Activated T-helper 2 cell treated with anti-CD3 and anti-CD28 coated beads, Interferon-gamma antibody, Interleukin-2, Interleukin-4, amounts not matched to agents 10 μg/mL and 5 μg/mL and 100 μg/mL, durations not matched to agents 14 hours and 24 hours and 36 hours (primary cell): ENCODE measurements at regions of chr19 and their contacts with region 1.

Region 1: GRCh38 chr19:23273590-23274413 is 23.6 kb upstream of the ZNF724 start:
- DNase-seq: peak; percentile 88
- H3K4me3 Mint-ChIP-seq: peak overlapping the region; percentile 96
- H3K27ac Mint-ChIP-seq: peak overlapping the region; percentile 89
- H3K4me1 Mint-ChIP-seq: peaks cover 10% of the 10 kb centered on the region
- H3K27me3 Mint-ChIP-seq: no peaks in the 10 kb centered on the region

Region 2: DNA sequence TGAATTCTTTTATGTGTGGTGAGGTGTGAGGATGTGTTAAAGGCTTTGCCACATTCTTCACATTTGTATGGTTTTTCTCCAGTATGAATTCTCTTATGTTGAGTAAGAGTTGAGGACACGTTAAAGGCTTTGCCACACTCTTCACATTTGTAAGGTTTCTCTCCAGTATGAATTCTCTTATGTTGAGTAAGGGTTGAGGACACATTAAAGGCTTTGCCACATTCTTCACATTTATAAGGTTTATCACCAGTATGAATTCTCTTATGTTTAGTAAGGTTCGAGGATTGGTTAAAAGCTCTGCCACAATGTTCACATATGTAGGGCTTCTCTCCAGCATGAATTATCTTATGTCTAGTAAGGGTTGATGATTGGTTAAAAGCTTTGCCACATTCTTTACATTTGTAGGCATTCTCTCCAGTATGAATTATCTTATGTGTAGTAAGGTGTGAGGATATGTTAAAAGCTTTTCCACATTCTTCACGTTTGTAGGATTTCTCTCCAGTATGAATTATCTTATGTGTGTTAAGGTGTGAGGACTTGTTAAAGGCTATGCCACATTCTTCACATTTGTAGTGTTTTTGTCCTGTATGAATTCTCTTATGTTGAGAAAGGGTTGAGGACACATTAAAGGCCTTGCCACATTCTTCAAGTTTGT is 50.7 kb before region 1 on chr19:
- intact Hi-C with region 1: no loop called
- DNase-seq: no peak
- H3K4me3 Mint-ChIP-seq: no peak overlapping the region
- H3K27ac Mint-ChIP-seq: no peak overlapping the region
- H3K4me1 Mint-ChIP-seq: no peaks in the 10 kb centered on the region
- H3K27me3 Mint-ChIP-seq: no peaks in the 10 kb centered on the region

Region 3: GRCh38 chr19:23249911-23250649 is 23.7 kb before region 1 on chr19 and contains the start of gene ZNF724:
- intact Hi-C with region 1: loop called (anchors 1 kb)
- DNase-seq: peak; percentile 89
- H3K4me3 Mint-ChIP-seq: peak within 1 kb of the TSS; percentile 97
- H3K27ac Mint-ChIP-seq: peak within 1 kb of the TSS; percentile 97
- H3K4me1 Mint-ChIP-seq: peaks cover 1% of the 10 kb centered on the region
- H3K27me3 Mint-ChIP-seq: no peaks in the 10 kb centered on the region
- total RNA-seq, gene ZNF724: 12.1 TPM in 2 replicates

Region 4: DNA sequence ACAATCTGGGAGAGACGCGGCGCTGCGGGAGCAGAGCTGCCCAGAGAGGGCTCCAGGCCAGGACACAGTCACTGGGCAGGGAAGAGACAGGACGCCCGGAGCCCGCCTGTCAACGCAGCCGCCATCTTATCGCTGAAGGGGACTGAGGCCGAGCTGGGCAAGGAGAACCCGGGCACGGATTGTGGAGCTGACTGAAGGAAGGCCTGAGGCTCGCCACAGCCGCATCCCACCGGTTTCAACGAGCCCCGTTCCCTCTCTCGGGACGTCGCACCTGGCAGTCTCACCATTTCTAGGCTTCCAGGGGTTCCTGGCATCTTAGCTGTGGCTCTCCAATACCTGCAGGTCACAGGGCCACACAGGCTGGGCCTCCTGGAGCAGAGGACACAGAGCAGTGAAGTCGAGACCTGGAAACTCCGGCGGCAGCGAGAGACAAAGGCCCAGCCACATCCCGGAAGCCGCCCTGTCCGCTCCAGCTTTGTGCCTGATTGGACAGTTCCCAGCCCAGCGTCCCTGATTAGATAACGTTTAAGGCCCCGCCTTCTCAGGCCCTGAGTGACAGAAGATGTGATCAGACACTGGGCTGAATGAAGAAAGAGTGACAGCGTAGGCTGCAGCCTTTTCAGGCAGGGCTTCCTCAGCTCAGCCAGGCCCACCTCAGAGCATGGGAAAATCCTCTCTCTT is 121.4 kb after region 1 on chr19 and contains the start of gene ZNF91:
- intact Hi-C with region 1: loop called (anchors 10 kb)
- DNase-seq: peak; percentile 89
- H3K4me3 Mint-ChIP-seq: peak within 1 kb of the TSS; percentile 97
- H3K27ac Mint-ChIP-seq: peak within 1 kb of the TSS; percentile 98
- H3K4me1 Mint-ChIP-seq: no peaks in the 10 kb centered on the region
- H3K27me3 Mint-ChIP-seq: no peaks in the 10 kb centered on the region
- total RNA-seq, gene ZNF91: 26.5 and 27.2 TPM in 2 replicates

Region 5: GRCh38 chr19:24033301-24033962 is 759.6 kb after region 1 on chr19:
- intact Hi-C with region 1: loop called (anchors 2 kb)
- DNase-seq: peak; percentile 79
- H3K4me3 Mint-ChIP-seq: peak overlapping the region; percentile 100
- H3K27ac Mint-ChIP-seq: peak overlapping the region; percentile 98
- H3K4me1 Mint-ChIP-seq: peaks cover 20% of the 10 kb centered on the region
- H3K27me3 Mint-ChIP-seq: no peaks in the 10 kb centered on the region